HEK293T (cell line): ENCODE measurements at regions of chr1 and their contacts with region 1.

Region 1: DNA sequence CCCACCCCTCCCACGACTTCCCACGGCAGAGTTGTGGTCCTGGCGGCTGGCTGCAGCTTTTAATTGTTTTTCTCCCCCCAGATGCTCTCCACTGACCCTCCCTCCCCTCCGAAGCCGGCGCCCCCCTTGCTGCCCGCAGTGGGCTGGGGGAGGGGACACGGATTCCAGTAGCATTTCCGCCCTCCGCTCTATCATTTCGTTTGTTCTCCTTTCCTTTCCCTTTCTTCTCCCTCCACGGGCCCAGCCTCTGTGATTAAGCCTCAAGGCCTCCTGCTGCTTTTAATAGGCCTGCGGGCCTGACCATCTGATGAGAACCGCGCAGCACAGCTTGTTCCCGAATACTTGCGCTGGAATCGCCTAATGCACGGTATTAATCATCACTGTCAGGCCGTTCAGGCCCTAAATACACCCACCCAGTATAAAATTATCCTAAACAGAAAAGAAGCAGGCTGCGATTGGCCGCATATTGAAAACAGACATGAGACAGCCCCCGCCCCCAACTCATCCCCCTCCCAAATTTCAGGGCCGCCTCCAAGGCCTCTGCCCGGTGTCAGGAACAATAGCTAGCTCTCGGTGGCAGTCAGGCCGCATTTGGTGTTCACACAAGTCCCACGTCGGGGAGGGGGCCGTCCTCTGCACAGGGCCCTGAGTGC is 102.0 kb upstream of the ARHGEF16 start:
- DNase-seq: peak; percentile 74

Region 2: GRCh38 chr1:2586154-2587070 is 766.0 kb before region 1 on chr1 and contains the start of gene PRXL2B:
- CTCF ChIA-PET with region 1: no interaction called
- POLR2A ChIA-PET with region 1: no interaction called
- DNase-seq: peak; percentile 98

Region 3: DNA sequence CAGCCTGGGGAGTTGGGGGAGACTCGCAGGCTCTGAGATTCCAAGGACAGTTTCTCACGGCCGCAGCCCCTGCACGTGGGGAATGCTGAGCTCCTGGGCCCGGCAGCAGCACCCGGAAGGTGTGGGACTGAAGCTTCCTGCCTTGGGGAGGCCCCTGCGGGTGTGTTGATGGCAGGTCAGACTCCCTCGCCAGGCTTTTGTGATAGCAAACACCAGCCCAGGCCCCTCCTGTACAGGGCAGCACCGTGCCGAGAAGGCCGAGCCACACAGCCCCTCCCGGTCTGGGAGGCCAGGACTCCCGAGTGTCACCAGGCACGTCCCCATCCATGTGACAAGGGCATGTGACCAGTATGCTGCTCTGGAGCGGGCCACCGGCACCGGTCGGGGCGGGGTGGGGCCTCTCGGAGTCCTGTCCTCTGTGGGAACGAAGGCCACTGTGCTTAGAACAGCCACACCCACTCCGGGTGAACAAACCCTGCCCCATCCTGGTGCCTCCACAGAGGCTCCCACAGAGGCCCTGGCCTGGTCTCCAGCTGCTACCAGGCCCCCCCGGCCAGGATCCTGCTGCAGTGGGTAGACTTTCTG is 70.9 kb after region 1 on chr1:
- CTCF ChIA-PET with region 1: interaction called, 14 read pairs
- POLR2A ChIA-PET with region 1: interaction called, 7 read pairs
- DNase-seq: no peak

Region 4: GRCh38 chr1:3530926-3531818 is 178.7 kb after region 1 on chr1:
- CTCF ChIA-PET with region 1: no interaction called
- POLR2A ChIA-PET with region 1: no interaction called
- DNase-seq: peak; percentile 95